ENCODE measurements at regions of chr11 and their contacts with region 1.

Region 1: DNA sequence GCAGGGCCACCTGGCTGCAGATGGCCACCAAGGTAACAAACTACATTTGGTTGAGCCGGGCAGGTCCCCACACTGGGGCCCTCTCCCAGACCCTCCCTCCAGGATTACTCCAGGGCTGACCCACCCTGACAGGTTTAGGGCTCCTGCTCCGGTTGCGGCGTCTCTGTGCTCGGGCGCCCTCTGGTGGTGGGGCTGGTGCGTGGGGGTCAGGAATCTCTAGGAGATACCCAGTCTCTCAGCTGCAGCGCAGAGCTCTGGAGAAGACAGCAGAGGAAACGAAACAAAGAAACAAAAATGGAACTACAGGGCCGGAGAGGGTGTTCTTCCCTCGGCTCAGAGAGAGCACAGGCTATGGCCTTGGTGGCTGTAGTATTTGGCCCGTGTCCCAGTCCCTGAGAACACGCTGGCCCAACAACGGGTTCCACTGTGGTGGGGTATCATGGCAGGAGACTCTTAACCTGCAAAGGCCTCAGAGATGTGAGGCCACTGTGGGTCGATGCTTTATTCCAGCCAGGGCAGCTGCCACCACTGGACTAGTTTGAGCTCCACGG is 2.4 kb downstream of the C11orf96 start:
- DNase-seq: peak; percentile 81 to 85
- ATAC-seq: peak; percentile 18 to 71 (median 52)
- H3K4me3 ChIP-seq: peak overlapping the region; percentile 38 to 87 (median 80)
- H3K27ac ChIP-seq: peak overlapping the region; percentile 86 to 93 (median 92)
- H3K4me1 ChIP-seq: peaks cover 5 to 58% (median 32%) of the 10 kb centered on the region in 9 donors
- H3K27me3 ChIP-seq: peaks cover 0 to 49% (median 0%) of the 10 kb centered on the region in 7 donors
- CTCF ChIP-seq: peak; percentile 74 to 90 (median 84)

Region 2: GRCh38 chr11:43905813-43906241 is 39.0 kb before region 1 on chr11:
- intact Hi-C with region 1: loop called in 1 of 10 experiments (anchors 5 kb)
- DNase-seq: peak in 1 of 2 donors; percentile 76
- ATAC-seq: peak in 7 of 8 donors; percentile 16 to 85 (median 70)
- H3K4me3 ChIP-seq: peak overlapping the region in 1 of 10 donors; percentile 6
- H3K27ac ChIP-seq: peak overlapping the region in 8 of 10 donors; percentile 46 to 76 (median 70)
- H3K4me1 ChIP-seq: peaks cover 3 to 46% (median 22%) of the 10 kb centered on the region in 9 donors
- H3K27me3 ChIP-seq: no peaks in the 10 kb centered on the region
- CTCF ChIP-seq: no peak

Region 3: GRCh38 chr11:43987384-43988039 is 42.7 kb after region 1 on chr11:
- intact Hi-C with region 1: loop called in 8 of 10 experiments (anchors 2 to 10 kb)
- DNase-seq: peak; percentile 93 to 94
- ATAC-seq: peak; percentile 79 to 90 (median 87)
- H3K4me3 ChIP-seq: peak overlapping the region in 4 of 10 donors; percentile 3 to 15 (median 12)
- H3K27ac ChIP-seq: peak overlapping the region; percentile 25 to 88 (median 81)
- H3K4me1 ChIP-seq: peaks cover 30 to 72% (median 68%) of the 10 kb centered on the region in 9 donors
- H3K27me3 ChIP-seq: no peaks in the 10 kb centered on the region
- CTCF ChIP-seq: no peak

Region 4: GRCh38 chr11:44029977-44030911 is 85.4 kb after region 1 on chr11:
- intact Hi-C with region 1: loop called in 9 of 10 experiments (anchors 2 to 10 kb)
- DNase-seq: peak; percentile 42 to 70
- ATAC-seq: peak; percentile 79 to 91 (median 85)
- H3K4me3 ChIP-seq: no peak overlapping the region
- H3K27ac ChIP-seq: peak overlapping the region; percentile 49 to 89 (median 78)
- H3K4me1 ChIP-seq: peaks cover 9 to 43% (median 36%) of the 10 kb centered on the region in 9 donors
- H3K27me3 ChIP-seq: no peaks in the 10 kb centered on the region
- CTCF ChIP-seq: peak in 1 of 9 donors; percentile 3

Measured in heart right ventricle (tissue), 16 donors.